ENCODE measurements at regions of chr10 and their contacts with region 1.

Region 1: DNA sequence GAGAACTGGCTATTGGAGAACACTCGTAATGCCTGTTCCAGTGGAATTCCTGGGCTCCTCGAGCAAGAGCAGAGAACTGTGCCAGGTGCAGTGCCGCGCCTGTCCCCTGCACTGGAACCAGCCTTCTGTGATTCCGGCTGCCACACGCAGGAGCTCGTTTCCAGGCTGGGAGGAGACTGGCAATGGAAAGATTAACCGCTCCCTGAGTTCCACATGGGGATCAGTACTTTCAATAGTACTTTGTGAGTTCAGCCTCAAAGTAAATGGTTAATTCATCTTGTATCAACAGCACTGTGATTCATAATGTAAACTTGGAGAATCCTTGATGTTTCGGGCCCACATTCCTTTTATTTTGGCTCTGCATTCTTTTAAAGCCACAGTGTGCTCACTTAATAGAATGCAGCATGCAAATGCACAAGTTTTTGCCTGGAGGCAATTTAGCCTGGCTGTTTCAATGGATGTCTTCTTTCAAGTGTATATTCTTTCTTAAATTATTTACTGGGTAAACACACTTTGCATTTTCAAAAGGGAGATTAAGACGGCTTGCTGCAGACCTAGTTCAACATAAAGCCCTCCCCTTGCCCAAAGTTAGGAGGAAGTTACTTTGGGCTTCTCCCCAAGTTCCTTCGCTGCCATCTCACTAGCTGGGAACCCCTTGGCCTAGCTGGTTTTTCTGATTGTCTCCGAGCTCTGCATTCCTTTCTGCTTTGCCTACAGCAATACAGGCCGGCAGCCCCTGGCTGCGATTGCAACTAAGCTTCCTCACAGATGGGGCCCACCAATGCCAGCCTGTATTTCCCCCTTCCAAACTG is 138.1 kb upstream of the TCF7L2 start:
- DNase-seq: peak; percentile 89
- H3K4me3 Mint-ChIP-seq: peak overlapping the region; percentile 65
- H3K27ac Mint-ChIP-seq: peak overlapping the region; percentile 87
- H3K4me1 Mint-ChIP-seq: peaks cover 35% of the 10 kb centered on the region
- H3K27me3 Mint-ChIP-seq: no peaks in the 10 kb centered on the region
- CTCF ChIP-seq: no peak

Region 2: GRCh38 chr10:112915590-112916572 is 103.9 kb after region 1 on chr10:
- CTCF ChIA-PET with region 1: no interaction called
- POLR2A ChIA-PET with region 1: interaction called, 11 read pairs
- intact Hi-C with region 1: loop called (anchors 2 kb)
- DNase-seq: peak; percentile 87
- H3K4me3 Mint-ChIP-seq: peak overlapping the region; percentile 40
- H3K27ac Mint-ChIP-seq: peak overlapping the region; percentile 92
- H3K4me1 Mint-ChIP-seq: peaks cover 46% of the 10 kb centered on the region
- H3K27me3 Mint-ChIP-seq: no peaks in the 10 kb centered on the region
- CTCF ChIP-seq: no peak

Measured in MCF 10A (cell line).